Lower lobe of right lung (tissue), 2 donors: ENCODE measurements at regions of chr6 and their contacts with region 1.

Region 1: DNA sequence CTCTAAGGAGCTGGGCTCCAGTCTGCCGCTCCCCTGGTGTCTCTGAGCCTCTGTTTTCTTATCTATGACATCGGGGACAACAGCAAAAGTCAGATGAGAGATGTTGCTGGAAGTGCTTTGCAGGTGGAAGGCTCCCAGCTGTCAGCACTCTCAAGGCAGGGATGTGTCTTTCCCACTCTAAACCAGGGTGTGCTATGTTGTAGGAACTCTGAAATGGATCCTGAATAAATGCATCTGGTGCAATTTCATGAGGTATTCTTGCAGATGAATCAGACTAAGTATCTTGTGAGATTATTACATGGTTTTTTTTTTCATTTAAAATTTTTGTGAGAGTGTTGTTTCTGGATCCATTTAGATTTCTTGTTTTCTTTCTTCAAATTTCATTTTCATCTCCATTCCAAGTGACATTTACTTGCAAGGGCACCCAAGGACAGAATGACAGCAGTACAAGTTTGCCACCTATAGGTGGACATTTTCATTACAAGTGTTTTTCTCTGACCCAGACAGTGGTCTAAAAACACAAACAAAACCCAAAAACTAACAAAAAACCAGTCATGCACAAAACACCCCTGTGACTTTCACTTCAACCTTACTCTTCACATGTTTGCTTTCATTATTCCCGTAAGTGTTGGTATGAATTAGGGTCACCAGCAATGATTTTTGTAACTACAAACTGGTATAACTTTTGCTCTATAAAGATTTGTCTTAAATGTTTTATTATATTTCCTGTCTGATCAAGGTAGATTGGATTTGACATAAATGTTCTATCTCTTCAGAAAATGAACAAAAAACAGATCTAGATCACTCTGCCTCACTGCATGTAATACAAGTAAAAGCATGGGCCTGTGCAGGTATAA is 14.7 kb upstream of the SIM1 start:
- DNase-seq: no peak
- ATAC-seq: peak in 1 of 2 donors; percentile 62
- H3K4me3 ChIP-seq: no peak overlapping the region
- H3K27ac ChIP-seq: no peak overlapping the region
- H3K4me1 ChIP-seq: no peaks in the 10 kb centered on the region
- H3K27me3 ChIP-seq: peaks cover 10% of the 10 kb centered on the region
- CTCF ChIP-seq: peak; percentile 60

Region 2: GRCh38 chr6:100116411-100117194 is 362.8 kb before region 1 on chr6:
- intact Hi-C with region 1: loop called (anchors 2 kb)
- DNase-seq: no peak
- ATAC-seq: peak in 1 of 2 donors; percentile 64
- H3K4me3 ChIP-seq: no peak overlapping the region
- H3K27ac ChIP-seq: no peak overlapping the region
- H3K4me1 ChIP-seq: no peaks in the 10 kb centered on the region
- H3K27me3 ChIP-seq: no peaks in the 10 kb centered on the region
- CTCF ChIP-seq: peak; percentile 61